ENCODE measurements at regions of chr10 and their contacts with region 1.

Region 1: GRCh38 chr10:75910032-75910431 is 478.6 kb downstream of the LRMDA start:
- DNase-seq: peak; percentile 90
- ATAC-seq: peak; percentile 36; the same call in 1 of the 2 replicates
- H3K4me3 ChIP-seq: no peak overlapping the region
- H3K27ac ChIP-seq: no peak overlapping the region
- H3K4me1 ChIP-seq: peaks cover 7% of the 10 kb centered on the region
- H3K27me3 ChIP-seq: peaks cover 74% of the 10 kb centered on the region
- CTCF ChIP-seq: no peak

Region 2: DNA sequence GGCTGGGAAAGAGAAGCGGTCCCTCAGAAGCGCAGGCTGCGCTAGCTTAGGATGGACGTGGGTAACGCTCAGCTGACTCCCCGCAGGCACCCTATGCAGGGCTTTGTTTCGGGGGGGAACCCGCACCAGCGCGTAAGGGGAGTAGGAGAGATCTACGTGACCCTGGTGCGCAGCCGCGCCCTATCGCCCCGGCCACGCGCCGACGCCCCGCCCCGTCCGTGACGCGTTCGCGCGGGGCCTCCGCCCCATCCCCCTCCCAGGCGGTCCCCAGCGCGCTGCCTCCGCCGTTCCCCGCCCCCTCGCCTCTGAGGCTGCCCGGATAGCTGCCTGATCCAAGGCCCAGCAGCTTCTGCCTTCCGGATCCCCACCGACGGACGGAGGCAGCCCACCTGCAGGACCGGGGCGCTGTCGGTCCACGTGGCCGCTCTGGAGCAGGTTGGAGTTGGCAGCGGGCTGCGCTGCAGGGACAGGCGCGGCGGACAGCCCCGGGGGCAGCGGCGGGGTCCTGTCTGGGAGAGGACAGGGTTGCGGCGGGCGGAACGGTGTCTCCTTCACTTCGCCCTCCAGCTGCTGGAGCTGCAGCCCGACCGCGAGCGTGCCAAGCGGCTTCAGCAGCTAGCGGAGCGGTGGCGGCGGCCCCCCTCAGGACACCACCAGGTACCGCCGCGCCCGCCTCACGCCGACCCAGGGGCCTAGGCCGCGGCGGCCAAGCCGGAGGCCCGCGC is 699.6 kb before region 1 on chr10 and contains the start of gene VDAC2:
- CTCF ChIA-PET with region 1: no interaction called
- POLR2A ChIA-PET with region 1: interaction called, 19 read pairs
- intact Hi-C with region 1: no loop called
- DNase-seq: peak; percentile 99
- ATAC-seq: peak; percentile 88
- H3K4me3 ChIP-seq: peak within 1 kb of the TSS; percentile 72
- H3K27ac ChIP-seq: peak within 1 kb of the TSS; percentile 85
- H3K4me1 ChIP-seq: peaks cover 45% of the 10 kb centered on the region
- H3K27me3 ChIP-seq: no peaks in the 10 kb centered on the region
- CTCF ChIP-seq: no peak
- total RNA-seq, gene VDAC2: 463 and 542 TPM in 2 replicates

Region 3: GRCh38 chr10:75651417-75651816 is 258.6 kb before region 1 on chr10:
- CTCF ChIA-PET with region 1: no interaction called
- POLR2A ChIA-PET with region 1: no interaction called
- intact Hi-C with region 1: loop called (anchors 10 kb)
- DNase-seq: peak; percentile 64
- ATAC-seq: no peak
- H3K4me3 ChIP-seq: no peak overlapping the region
- H3K27ac ChIP-seq: no peak overlapping the region
- H3K4me1 ChIP-seq: peaks cover 48% of the 10 kb centered on the region
- H3K27me3 ChIP-seq: peaks cover 9% of the 10 kb centered on the region; the same call in 1 of the 2 replicates
- CTCF ChIP-seq: peak; percentile 71

Region 4: GRCh38 chr10:75788394-75789205 is 121.4 kb before region 1 on chr10:
- CTCF ChIA-PET with region 1: no interaction called
- POLR2A ChIA-PET with region 1: no interaction called
- intact Hi-C with region 1: no loop called
- DNase-seq: peak; percentile 80
- ATAC-seq: peak; percentile 84
- H3K4me3 ChIP-seq: no peak overlapping the region
- H3K27ac ChIP-seq: no peak overlapping the region
- H3K4me1 ChIP-seq: peaks cover 12% of the 10 kb centered on the region
- H3K27me3 ChIP-seq: peaks cover 31% of the 10 kb centered on the region
- CTCF ChIP-seq: no peak

Region 5: GRCh38 chr10:75887992-75888680 is 21.9 kb before region 1 on chr10:
- CTCF ChIA-PET with region 1: no interaction called
- POLR2A ChIA-PET with region 1: interaction called, 16 read pairs
- intact Hi-C with region 1: no loop called
- DNase-seq: no peak
- ATAC-seq: no peak
- H3K4me3 ChIP-seq: no peak overlapping the region
- H3K27ac ChIP-seq: no peak overlapping the region
- H3K4me1 ChIP-seq: no peaks in the 10 kb centered on the region
- H3K27me3 ChIP-seq: peaks cover 34% of the 10 kb centered on the region
- CTCF ChIP-seq: no peak

Region 6: GRCh38 chr10:76190634-76191270 is 280.7 kb after region 1 on chr10:
- CTCF ChIA-PET with region 1: no interaction called
- POLR2A ChIA-PET with region 1: no interaction called
- intact Hi-C with region 1: no loop called
- DNase-seq: no peak
- ATAC-seq: no peak
- H3K4me3 ChIP-seq: no peak overlapping the region
- H3K27ac ChIP-seq: no peak overlapping the region
- H3K4me1 ChIP-seq: no peaks in the 10 kb centered on the region
- H3K27me3 ChIP-seq: peaks cover 90% of the 10 kb centered on the region
- CTCF ChIP-seq: no peak

Region 7: DNA sequence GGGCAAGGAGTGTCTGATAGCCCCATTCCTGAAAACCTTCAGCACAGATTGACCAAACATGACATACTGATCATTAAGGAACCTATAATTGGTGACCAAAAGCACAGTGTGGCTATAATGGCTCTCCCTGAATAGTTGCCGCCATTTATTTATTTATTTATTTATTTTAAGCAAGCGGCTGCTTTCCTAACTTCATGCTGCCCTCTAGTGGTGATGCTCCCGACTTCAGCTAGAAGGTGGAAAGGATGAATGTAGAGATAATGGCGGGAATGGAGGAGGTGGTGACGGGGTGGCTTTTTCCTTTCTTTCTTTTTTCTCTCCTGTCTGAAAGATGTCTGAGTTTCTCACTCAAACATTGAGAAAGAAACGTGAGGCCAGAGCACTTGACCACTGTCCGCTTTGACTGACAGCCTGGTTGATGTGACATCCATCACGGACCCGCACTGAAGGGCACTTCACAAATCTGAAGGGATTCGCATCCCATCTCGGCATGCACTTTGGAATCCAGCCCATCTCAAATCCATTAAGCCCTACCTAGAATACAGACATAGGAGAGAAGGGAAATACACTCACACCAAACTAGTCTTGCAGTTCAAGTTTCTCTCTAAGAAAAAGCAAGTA is 637.4 kb after region 1 on chr10:
- CTCF ChIA-PET with region 1: no interaction called
- POLR2A ChIA-PET with region 1: no interaction called
- intact Hi-C with region 1: loop called (anchors 10 kb)
- DNase-seq: peak; percentile 100
- ATAC-seq: peak; percentile 85
- H3K4me3 ChIP-seq: peak overlapping the region; percentile 44
- H3K27ac ChIP-seq: no peak overlapping the region
- H3K4me1 ChIP-seq: peaks cover 5% of the 10 kb centered on the region
- H3K27me3 ChIP-seq: peaks cover 26% of the 10 kb centered on the region
- CTCF ChIP-seq: peak; percentile 100

Measured in PC-3 (cell line).